ENCODE measurements at regions of chr21 and their contacts with region 1.

Region 1: DNA sequence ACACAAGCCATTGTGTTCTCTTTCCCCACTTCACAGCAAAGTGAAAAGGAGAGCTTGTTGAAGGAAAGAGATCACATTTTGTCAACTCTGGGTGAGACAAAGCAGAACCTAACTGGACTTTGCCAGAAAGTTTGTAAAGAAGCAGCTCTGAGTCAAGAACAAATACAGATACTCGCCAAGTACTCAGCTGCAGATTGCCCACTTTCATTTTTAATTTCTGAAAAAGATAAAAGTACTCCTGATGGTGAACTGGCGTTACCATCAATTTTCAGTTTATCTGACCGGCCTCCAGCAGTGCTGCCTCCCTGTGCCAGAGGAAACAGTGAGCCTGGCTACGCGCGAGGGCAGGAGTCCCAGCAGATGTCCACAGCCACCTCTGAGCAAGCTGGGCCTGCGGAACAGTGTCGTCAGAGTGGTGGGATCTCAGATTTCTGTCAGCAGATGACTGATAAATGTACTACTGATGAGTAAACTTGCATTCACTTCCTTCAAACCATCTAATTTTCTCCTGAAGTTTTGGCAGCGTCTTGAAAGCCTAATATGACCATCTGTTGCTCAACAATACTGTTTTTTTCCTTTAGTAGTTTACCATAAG is 43.7 kb downstream of the BACH1 start:
- DNase-seq: no peak
- H3K4me3 ChIP-seq: no peak overlapping the region
- H3K27ac ChIP-seq: no peak overlapping the region
- H3K4me1 ChIP-seq: no peaks in the 10 kb centered on the region
- H3K27me3 ChIP-seq: no peaks in the 10 kb centered on the region
- CTCF ChIP-seq: no peak
- POLR2A ChIP-seq: no peak

Region 2: GRCh38 chr21:28253338-28253737 is 1089.1 kb before region 1 on chr21:
- intact Hi-C with region 1: no loop called
- DNase-seq: no peak
- H3K4me3 ChIP-seq: no peak overlapping the region
- H3K27ac ChIP-seq: no peak overlapping the region
- H3K4me1 ChIP-seq: no peaks in the 10 kb centered on the region
- H3K27me3 ChIP-seq: no peaks in the 10 kb centered on the region
- CTCF ChIP-seq: no peak
- POLR2A ChIP-seq: no peak

Region 3: DNA sequence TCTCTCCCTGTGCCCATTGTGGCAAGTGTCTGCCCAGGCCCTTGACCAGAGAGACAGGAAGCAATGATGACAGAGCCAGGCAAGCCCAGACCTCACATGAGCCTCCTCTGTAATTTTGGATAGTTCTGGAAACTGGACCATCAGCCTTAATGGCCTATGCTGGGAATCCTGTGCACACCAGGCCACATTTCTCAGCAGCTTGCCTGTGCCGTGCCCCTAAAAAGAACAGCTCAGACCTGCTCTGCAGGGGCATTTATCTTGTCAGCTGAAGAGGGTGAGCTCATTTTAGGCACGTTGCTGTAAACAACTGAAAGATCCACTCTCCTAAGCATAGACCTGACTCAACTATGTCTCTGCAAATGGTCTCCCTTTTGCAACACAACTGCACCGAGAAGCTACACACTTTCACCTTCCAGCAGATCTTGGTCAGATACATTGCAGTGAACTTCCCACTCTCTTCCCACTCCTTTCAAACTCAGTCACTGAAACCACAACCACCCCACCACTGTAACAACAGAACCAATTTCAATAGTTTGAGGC is 97.3 kb before region 1 on chr21:
- intact Hi-C with region 1: no loop called
- DNase-seq: no peak
- H3K4me3 ChIP-seq: no peak overlapping the region
- H3K27ac ChIP-seq: no peak overlapping the region
- H3K4me1 ChIP-seq: no peaks in the 10 kb centered on the region
- H3K27me3 ChIP-seq: no peaks in the 10 kb centered on the region
- CTCF ChIP-seq: no peak
- POLR2A ChIP-seq: no peak

Region 4: DNA sequence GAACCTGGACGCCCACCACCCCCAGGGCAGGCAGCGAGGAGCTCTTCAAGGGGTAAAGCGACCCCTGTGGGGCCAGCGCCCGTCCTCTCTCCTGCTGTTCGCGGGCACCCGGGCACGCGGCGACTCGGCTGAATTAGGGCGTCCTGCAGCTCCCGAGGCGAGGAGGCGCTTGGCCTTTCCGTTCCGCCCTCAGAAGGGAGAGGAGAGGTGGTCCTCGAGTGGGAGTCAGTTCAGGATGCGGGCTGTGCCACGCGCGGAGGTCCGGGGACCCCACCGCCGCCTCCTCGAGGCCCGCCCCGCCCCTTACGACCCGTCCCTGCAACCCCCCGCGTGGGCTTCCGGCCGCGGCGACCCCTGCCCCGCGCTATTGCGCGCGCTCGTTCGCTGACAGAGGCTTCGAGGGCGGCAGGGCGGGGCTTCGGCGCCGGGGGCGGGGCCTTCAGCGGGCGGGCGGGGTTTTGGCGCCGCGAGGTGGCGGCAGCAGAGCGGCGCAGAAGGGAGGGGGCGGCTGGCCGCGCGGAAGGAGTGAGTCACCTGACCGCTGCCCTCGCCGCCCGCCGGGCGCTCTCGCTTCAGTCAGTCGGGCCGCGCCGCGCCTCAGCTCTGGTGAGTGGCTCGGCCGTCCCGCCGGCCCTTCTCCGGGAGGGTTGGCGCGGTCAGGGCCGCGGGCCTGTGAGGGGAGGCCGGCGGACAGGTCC is 44.0 kb before region 1 on chr21 and contains the start of gene BACH1:
- intact Hi-C with region 1: loop called (anchors 5 kb)
- DNase-seq: peak; percentile 86
- H3K4me3 ChIP-seq: peak within 1 kb of the TSS; percentile 89 to 99
- H3K27ac ChIP-seq: peak within 1 kb of the TSS; percentile 85 to 97
- H3K4me1 ChIP-seq: no peaks in the 10 kb centered on the region
- H3K27me3 ChIP-seq: no peaks in the 10 kb centered on the region
- CTCF ChIP-seq: peak; percentile 48 to 79 (median 61)
- POLR2A ChIP-seq: peak; percentile 92
- total RNA-seq, gene BACH1: 42.4 to 46.2 TPM